ENCODE measurements at regions of chr9 and their contacts with region 1.

Region 1: GRCh38 chr9:18605766-18606180 is 131.8 kb downstream of the ADAMTSL1 start:
- DNase-seq: no peak

Region 2: GRCh38 chr9:18489861-18490260 is 115.9 kb before region 1 on chr9:
- intact Hi-C with region 1: loop called (anchors 10 kb)
- DNase-seq: peak in 1 of 10 donors; percentile 33